ENCODE measurements at regions of chr18 and their contacts with region 1.

Region 1: DNA sequence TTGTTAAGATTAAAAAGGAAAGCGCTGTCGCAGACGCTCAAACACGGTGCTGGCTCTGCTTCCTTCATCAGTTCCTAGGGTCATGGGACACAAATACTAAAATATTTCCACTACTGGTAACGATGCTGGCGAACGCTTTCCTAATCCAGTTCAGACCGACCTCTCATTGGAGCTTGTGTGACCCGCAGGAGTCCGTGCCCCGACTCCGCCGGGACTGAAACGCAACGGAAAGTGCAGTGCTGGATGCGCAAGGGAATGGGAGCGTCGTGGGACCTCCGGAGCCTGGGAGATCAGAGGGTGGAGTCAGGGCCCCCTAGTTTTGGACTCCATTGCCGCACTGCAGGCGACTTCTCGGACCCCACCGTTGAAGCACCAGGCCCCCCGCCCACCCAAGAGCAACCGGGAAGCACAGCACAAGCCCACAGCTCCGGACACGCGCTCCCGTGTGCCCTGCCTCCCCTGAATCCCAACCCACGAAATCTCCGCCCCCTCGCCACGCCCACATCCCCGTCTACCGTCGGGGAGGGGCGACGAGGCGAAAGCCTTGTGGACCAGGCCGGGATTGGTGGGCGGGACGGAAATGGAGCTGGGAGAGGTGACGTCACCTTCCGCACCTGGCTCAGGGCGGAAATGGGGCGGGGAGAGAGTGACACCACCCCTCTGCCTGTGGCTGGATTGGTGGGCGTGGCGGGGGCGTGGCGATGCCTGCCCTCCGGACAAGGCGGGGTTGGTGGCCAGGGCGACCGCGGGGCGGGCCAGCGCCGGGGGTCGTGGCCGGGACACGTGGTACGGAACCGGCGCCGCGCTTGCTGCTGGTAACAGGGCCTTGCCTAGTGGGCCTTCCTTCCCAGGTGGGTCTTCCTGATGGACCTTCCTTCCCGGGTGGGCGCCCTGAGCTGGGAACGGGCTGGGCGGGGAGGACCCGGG is at the start of gene CNDP2:
- DNase-seq: peak; percentile 97 to 99 (median 99)
- H3K4me3 ChIP-seq: peak within 1 kb of the TSS; percentile 77
- H3K4me3 Mint-ChIP-seq: peak within 1 kb of the TSS; percentile 92 to 97 (median 96)
- H3K27ac ChIP-seq: peak within 1 kb of the TSS; percentile 86
- H3K27ac Mint-ChIP-seq: peak within 1 kb of the TSS; percentile 94 to 99 (median 98)
- H3K4me1 ChIP-seq: peaks cover 37% of the 10 kb centered on the region
- H3K4me1 Mint-ChIP-seq: peaks cover 41 to 59% (median 50%) of the 10 kb centered on the region in 3 donors
- H3K27me3 ChIP-seq: no peaks in the 10 kb centered on the region
- H3K27me3 Mint-ChIP-seq: peaks cover 0 to 2% of the 10 kb centered on the region in 2 donors
- total RNA-seq, gene CNDP2: 206 to 213 TPM

Region 2: DNA sequence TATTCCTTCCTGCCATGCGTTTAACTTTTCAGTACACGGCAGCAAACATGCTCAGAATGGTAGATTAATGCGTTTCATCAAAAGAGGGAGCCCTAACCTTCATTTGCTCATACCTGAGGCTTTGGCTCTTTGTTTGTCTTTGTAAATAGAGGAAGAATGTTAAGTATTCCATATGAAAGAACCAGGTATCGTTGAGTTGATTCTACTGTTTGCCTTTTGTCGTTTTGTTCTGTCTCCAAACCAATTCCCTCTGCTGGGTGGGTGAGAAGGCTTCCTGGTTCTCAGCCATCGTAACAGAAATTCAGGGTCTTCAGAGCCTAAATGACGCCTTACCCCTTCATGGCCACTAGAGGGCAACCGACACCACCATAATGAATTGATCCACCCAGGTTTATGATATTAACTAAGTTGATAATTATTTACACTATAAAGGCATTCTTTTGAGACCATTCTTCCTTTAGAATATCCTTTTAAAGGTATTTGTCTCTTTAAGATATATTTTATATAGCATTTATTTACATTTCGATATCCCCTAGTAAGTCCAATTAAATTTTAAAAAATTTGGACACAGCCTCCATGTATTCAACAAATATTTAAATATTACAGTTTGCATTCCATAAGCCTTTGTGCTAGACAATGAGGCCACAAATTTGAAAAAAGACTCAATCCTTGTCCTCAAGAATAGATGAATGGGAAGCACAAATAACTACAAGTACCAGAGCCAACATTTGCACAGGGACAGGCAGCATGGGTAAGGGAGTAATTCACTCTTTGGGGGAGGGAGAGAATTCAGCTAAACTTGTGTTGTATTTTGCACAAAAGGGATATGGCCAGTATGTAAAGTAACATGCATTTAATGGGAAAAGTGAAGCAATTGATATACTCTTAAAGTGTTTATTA is 299.4 kb before region 1 on chr18:
- CTCF ChIA-PET with region 1: interaction called, 22 read pairs
- POLR2A ChIA-PET with region 1: no interaction called
- DNase-seq: peak; percentile 13 to 74 (median 58)
- H3K4me3 ChIP-seq: peak overlapping the region; percentile 18
- H3K4me3 Mint-ChIP-seq: peak overlapping the region; percentile 34 to 87 (median 79)
- H3K27ac ChIP-seq: no peak overlapping the region
- H3K27ac Mint-ChIP-seq: peak overlapping the region in 7 of 8 donors; percentile 68 to 96 (median 81)
- H3K4me1 ChIP-seq: no peaks in the 10 kb centered on the region
- H3K4me1 Mint-ChIP-seq: peaks cover 0 to 6% (median 3%) of the 10 kb centered on the region in 3 donors
- H3K27me3 ChIP-seq: no peaks in the 10 kb centered on the region
- H3K27me3 Mint-ChIP-seq: peaks cover 1 to 23% of the 10 kb centered on the region in 2 donors

Region 3: DNA sequence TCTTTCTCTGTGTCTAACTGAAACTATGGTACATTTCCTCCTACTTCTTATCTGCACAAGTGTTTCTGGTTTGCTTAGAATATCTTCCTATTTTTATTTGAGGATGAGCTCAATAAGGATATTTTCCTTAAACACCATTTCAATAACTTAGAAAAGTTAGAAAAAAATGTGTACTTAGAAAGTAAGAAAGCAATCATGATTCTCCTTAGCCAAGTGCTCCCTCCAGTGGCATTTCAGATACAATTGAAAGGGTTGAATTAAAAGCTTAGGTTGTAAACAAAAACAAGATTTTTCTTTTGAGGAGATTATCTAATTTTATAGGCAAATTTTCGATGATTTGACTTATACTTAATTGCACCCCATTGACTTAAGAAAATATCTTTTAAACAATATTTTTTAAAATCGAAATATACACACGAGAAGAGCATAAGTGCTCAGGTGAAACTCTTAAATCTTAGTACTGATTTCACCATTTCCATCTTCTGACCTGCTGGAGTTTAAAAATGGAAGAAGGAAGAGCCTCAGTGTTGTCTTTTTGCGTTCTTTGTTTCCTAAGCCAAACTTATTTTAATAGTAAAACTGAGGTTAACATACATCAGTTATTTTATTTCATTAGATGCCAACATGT is 153.3 kb before region 1 on chr18:
- CTCF ChIA-PET with region 1: interaction called, 18 read pairs
- POLR2A ChIA-PET with region 1: no interaction called
- DNase-seq: peak in 2 of 5 donors; percentile 33 to 48
- H3K4me3 ChIP-seq: no peak overlapping the region
- H3K4me3 Mint-ChIP-seq: no peak overlapping the region
- H3K27ac ChIP-seq: no peak overlapping the region
- H3K27ac Mint-ChIP-seq: no peak overlapping the region
- H3K4me1 ChIP-seq: no peaks in the 10 kb centered on the region
- H3K4me1 Mint-ChIP-seq: no peaks in the 10 kb centered on the region
- H3K27me3 ChIP-seq: no peaks in the 10 kb centered on the region
- H3K27me3 Mint-ChIP-seq: peaks cover 0 to 16% of the 10 kb centered on the region in 2 donors

Region 4: DNA sequence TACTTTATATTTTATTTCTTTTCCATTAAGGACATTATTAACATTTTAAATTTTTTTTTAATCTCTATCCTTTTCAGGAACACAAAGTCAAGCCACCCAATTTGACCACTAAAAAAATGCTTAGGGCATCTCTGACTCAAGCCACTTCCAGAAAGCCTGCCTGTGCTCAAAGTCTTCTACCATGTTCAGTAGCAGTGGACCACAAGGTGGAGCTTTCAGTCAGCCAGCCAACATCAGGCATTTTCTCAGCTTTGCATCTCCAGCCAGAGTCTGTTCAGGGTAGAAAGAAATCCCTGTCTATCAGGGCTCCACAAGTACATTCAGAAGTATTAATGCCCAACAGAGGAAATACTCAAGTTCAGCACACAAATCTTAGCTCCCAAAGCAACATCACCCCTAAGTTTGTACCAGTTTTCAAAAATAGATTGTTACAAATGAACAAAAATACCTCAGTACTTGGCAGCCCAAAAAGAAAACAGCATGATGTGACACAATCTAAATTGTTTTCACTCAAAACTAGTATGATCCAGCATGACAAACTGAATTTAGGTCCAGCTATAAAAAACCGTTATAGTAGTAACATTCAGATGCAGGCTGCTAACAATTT is 142.6 kb before region 1 on chr18:
- CTCF ChIA-PET with region 1: interaction called, 156 read pairs
- POLR2A ChIA-PET with region 1: interaction called, 7 read pairs
- DNase-seq: peak; percentile 21 to 72 (median 40)
- H3K4me3 ChIP-seq: no peak overlapping the region
- H3K4me3 Mint-ChIP-seq: no peak overlapping the region
- H3K27ac ChIP-seq: no peak overlapping the region
- H3K27ac Mint-ChIP-seq: no peak overlapping the region
- H3K4me1 ChIP-seq: peaks cover 4% of the 10 kb centered on the region
- H3K4me1 Mint-ChIP-seq: peaks cover 3 to 12% (median 9%) of the 10 kb centered on the region in 3 donors
- H3K27me3 ChIP-seq: no peaks in the 10 kb centered on the region
- H3K27me3 Mint-ChIP-seq: peaks cover 9 to 11% of the 10 kb centered on the region in 2 donors

Region 5: GRCh38 chr18:74370115-74370514 is 125.7 kb before region 1 on chr18:
- CTCF ChIA-PET with region 1: interaction called, 19 read pairs
- POLR2A ChIA-PET with region 1: interaction called, 11 read pairs
- DNase-seq: no peak
- H3K4me3 ChIP-seq: no peak overlapping the region
- H3K4me3 Mint-ChIP-seq: no peak overlapping the region
- H3K27ac ChIP-seq: no peak overlapping the region
- H3K27ac Mint-ChIP-seq: peak overlapping the region in 1 of 8 donors; percentile 35
- H3K4me1 ChIP-seq: peaks cover 52% of the 10 kb centered on the region
- H3K4me1 Mint-ChIP-seq: peaks cover 29 to 52% (median 51%) of the 10 kb centered on the region in 3 donors
- H3K27me3 ChIP-seq: no peaks in the 10 kb centered on the region
- H3K27me3 Mint-ChIP-seq: peaks cover 18 to 19% of the 10 kb centered on the region in 2 donors

Region 6: DNA sequence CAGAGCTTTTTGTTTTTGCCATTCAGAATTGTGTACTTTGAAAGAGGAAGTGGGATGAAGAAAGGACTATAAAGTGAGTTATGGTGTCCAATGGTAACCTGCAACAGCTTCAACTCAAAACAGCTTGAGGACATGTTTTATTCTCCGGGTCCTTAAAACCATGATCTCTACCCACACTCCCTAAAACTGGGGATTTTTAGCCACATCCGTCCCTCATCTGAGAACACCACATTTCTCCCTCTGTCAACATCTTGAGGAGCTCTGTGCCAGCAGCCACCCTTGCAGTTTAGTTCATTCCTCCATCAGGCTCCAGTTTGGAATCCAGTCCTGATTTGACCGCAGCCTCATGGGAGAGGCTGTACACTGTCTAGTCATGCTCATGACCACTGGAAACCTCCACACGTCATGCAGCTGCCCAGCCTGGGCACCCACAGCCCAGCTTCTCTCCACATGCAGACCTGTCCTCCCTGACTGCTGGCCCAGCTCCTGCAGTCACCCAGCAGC is 117.6 kb before region 1 on chr18:
- CTCF ChIA-PET with region 1: interaction called, 19 read pairs
- POLR2A ChIA-PET with region 1: interaction called, 11 read pairs
- DNase-seq: peak in 2 of 5 donors; percentile 35 to 78
- H3K4me3 ChIP-seq: peak overlapping the region; percentile 39
- H3K4me3 Mint-ChIP-seq: peak overlapping the region in 6 of 7 donors; percentile 1 to 62 (median 30)
- H3K27ac ChIP-seq: no peak overlapping the region
- H3K27ac Mint-ChIP-seq: peak overlapping the region; percentile 34 to 80 (median 71)
- H3K4me1 ChIP-seq: peaks cover 50% of the 10 kb centered on the region
- H3K4me1 Mint-ChIP-seq: peaks cover 30 to 50% (median 34%) of the 10 kb centered on the region in 3 donors
- H3K27me3 ChIP-seq: no peaks in the 10 kb centered on the region
- H3K27me3 Mint-ChIP-seq: peaks cover 0 to under 1% of the 10 kb centered on the region in 2 donors

Region 7: GRCh38 chr18:74551936-74552555 is 56.2 kb after region 1 on chr18:
- CTCF ChIA-PET with region 1: interaction called, 13 read pairs
- POLR2A ChIA-PET with region 1: no interaction called
- DNase-seq: peak; percentile 52 to 76 (median 63)
- H3K4me3 ChIP-seq: no peak overlapping the region
- H3K4me3 Mint-ChIP-seq: no peak overlapping the region
- H3K27ac ChIP-seq: no peak overlapping the region
- H3K27ac Mint-ChIP-seq: peak overlapping the region in 1 of 8 donors; percentile 65
- H3K4me1 ChIP-seq: no peaks in the 10 kb centered on the region
- H3K4me1 Mint-ChIP-seq: peaks cover 0 to 2% (median 0%) of the 10 kb centered on the region in 3 donors
- H3K27me3 ChIP-seq: no peaks in the 10 kb centered on the region
- H3K27me3 Mint-ChIP-seq: peaks cover 12 to 16% of the 10 kb centered on the region in 2 donors

Region 8: DNA sequence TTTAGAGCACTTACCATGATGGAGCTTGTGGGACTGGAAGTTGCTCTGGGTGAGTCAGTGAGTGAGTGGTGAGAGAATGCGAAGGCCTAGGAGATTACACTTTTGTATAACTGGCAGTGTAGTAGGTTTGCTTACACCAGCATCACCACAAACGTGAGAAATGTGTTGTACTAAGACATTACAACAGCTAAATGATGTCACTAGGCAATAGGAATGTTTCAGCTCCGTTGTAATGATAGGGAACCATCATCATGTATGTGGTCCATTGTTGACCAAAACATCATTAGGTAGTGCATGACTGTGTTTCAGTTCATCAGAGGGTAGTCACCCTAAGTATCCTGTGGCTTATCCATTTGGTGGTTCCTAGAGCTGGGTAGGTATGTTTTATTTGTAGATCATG is 113.7 kb after region 1 on chr18:
- CTCF ChIA-PET with region 1: no interaction called
- POLR2A ChIA-PET with region 1: no interaction called
- DNase-seq: no peak
- H3K4me3 ChIP-seq: no peak overlapping the region
- H3K4me3 Mint-ChIP-seq: no peak overlapping the region
- H3K27ac ChIP-seq: no peak overlapping the region
- H3K27ac Mint-ChIP-seq: peak overlapping the region in 1 of 8 donors; percentile 28
- H3K4me1 ChIP-seq: peaks cover 8% of the 10 kb centered on the region
- H3K4me1 Mint-ChIP-seq: peaks cover 19 to 41% (median 34%) of the 10 kb centered on the region in 3 donors
- H3K27me3 ChIP-seq: no peaks in the 10 kb centered on the region
- H3K27me3 Mint-ChIP-seq: no peaks in the 10 kb centered on the region